Activated CD4-positive, alpha-beta T cell treated with anti-CD3 and anti-CD28 coated beads, Interleukin-2, amount 10 ng/mL, durations not matched to agents 24 days and 14 days (primary cell): ENCODE measurements at regions of chr5 and their contacts with region 1.

Region 1: DNA sequence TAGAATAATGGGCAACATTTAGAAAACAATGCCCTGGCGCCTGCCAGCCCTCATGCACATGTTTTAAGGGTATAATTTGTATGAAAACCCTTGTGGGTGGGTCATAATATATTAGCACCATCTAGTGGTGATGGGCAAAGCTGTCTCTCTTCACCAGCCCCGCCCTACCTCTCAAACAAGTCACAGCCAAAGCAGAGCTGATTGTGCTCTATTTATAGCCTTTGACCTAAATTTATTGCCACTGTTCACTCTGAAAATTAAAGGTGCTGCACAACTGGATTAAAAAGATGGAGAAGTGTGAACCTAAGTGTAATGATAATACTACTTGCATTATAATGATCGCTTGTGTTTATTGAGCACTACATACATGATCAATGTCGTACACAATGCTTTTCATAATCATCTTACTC is 131.9 kb upstream of the ANKH start:
- DNase-seq: peak; percentile 85
- H3K4me3 Mint-ChIP-seq: no peak overlapping the region
- H3K27ac Mint-ChIP-seq: no peak overlapping the region
- H3K4me1 Mint-ChIP-seq: peaks cover 8% of the 10 kb centered on the region
- H3K27me3 Mint-ChIP-seq: peaks cover 38% of the 10 kb centered on the region

Region 2: DNA sequence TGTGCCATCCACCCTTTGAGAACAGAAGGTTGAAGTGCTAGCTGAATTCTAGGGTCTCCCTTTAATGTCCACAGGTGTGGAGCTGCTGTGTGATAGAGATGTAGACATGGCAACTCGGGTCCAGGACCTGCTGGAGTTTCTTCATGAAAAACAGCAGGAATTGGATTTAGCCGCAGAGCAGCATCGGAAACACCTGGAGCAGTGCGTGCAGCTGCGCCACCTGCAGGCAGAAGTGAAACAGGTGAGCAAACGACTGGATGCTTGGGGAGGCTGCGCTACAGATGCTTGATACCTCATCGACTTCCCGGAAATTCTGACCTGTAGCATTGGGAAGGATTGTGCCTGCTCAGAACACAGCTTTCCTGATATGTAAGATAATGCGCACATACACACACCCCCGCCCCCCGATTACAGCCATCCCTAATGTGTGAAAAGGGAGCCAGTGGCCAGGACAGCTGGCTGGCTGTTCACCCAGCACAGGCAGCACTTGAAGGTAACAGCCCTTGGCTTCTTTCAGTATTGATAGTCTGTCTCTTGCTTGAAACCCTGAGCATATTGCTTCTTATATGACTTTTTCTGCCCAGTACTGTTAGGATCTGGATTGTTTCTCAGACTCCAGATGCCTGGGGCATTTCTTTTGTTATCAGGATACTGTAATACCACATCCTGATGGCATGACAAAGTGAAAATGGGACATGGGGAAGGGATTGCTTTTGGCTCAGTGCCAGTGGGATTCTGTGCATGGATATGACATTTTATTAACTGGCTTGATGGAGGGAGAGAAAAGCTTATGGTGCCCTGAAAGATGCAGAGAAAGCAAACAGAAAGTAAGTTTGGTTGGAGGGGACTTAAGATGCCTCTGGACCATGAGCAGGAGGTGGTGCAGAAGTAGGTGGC is 638.7 kb before region 1 on chr5:
- intact Hi-C with region 1: loop called (anchors 5 kb)
- DNase-seq: peak; percentile 62
- H3K4me3 Mint-ChIP-seq: peak overlapping the region; percentile 56
- H3K27ac Mint-ChIP-seq: peak overlapping the region; percentile 68
- H3K4me1 Mint-ChIP-seq: peaks cover 44% of the 10 kb centered on the region
- H3K27me3 Mint-ChIP-seq: no peaks in the 10 kb centered on the region

Region 3: DNA sequence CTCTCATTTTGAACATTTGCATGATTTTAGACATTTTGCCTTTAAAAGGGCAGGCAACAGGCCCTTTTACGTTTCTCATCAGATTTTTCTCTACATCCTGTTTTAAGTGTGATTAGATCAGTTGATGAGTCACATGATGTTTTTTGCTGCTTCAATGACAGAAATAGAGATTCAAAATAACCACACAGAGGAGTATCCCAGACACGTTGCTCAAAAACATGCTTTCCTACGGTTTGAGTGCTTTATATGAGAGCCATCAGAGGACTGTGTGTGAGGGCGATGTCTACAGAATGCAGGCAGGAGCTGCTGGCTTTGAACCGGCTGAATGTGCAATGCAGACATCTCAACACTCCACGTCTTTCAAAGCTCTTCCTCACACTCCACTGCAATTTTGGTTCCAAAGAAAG is 296.9 kb before region 1 on chr5:
- intact Hi-C with region 1: loop called (anchors 5 kb)
- DNase-seq: peak; percentile 87
- H3K4me3 Mint-ChIP-seq: peak overlapping the region; percentile 82
- H3K27ac Mint-ChIP-seq: peak overlapping the region; percentile 99
- H3K4me1 Mint-ChIP-seq: peaks cover 69% of the 10 kb centered on the region
- H3K27me3 Mint-ChIP-seq: no peaks in the 10 kb centered on the region

Region 4: GRCh38 chr5:14809369-14810155 is 194.0 kb before region 1 on chr5:
- intact Hi-C with region 1: loop called (anchors 2 kb)
- DNase-seq: peak; percentile 93
- H3K4me3 Mint-ChIP-seq: peak overlapping the region; percentile 65
- H3K27ac Mint-ChIP-seq: peak overlapping the region; percentile 80
- H3K4me1 Mint-ChIP-seq: peaks cover 37% of the 10 kb centered on the region
- H3K27me3 Mint-ChIP-seq: peaks cover 4% of the 10 kb centered on the region

Region 5: GRCh38 chr5:14946815-14947640 is 56.5 kb before region 1 on chr5:
- intact Hi-C with region 1: loop called (anchors 1 kb)
- DNase-seq: peak; percentile 76
- H3K4me3 Mint-ChIP-seq: no peak overlapping the region
- H3K27ac Mint-ChIP-seq: no peak overlapping the region
- H3K4me1 Mint-ChIP-seq: peaks cover 8% of the 10 kb centered on the region
- H3K27me3 Mint-ChIP-seq: peaks cover 4% of the 10 kb centered on the region